PC-3 (cell line): ENCODE measurements at regions of chr12 and their contacts with region 1.

Region 1: GRCh38 chr12:25436203-25437030 is 116.7 kb downstream of the LMNTD1 start:
- DNase-seq: peak; percentile 84
- ATAC-seq: peak; percentile 69
- H3K4me3 ChIP-seq: peak overlapping the region; percentile 82
- H3K27ac ChIP-seq: no peak overlapping the region
- H3K4me1 ChIP-seq: peaks cover 20% of the 10 kb centered on the region
- H3K27me3 ChIP-seq: no peaks in the 10 kb centered on the region
- CTCF ChIP-seq: peak; percentile 93

Region 2: GRCh38 chr12:25364529-25365339 is 71.7 kb before region 1 on chr12:
- CTCF ChIA-PET with region 1: no interaction called
- POLR2A ChIA-PET with region 1: no interaction called
- intact Hi-C with region 1: no loop called
- DNase-seq: no peak
- ATAC-seq: no peak
- H3K4me3 ChIP-seq: no peak overlapping the region
- H3K27ac ChIP-seq: no peak overlapping the region
- H3K4me1 ChIP-seq: no peaks in the 10 kb centered on the region
- H3K27me3 ChIP-seq: peaks cover 23% of the 10 kb centered on the region
- CTCF ChIP-seq: no peak

Region 3: DNA sequence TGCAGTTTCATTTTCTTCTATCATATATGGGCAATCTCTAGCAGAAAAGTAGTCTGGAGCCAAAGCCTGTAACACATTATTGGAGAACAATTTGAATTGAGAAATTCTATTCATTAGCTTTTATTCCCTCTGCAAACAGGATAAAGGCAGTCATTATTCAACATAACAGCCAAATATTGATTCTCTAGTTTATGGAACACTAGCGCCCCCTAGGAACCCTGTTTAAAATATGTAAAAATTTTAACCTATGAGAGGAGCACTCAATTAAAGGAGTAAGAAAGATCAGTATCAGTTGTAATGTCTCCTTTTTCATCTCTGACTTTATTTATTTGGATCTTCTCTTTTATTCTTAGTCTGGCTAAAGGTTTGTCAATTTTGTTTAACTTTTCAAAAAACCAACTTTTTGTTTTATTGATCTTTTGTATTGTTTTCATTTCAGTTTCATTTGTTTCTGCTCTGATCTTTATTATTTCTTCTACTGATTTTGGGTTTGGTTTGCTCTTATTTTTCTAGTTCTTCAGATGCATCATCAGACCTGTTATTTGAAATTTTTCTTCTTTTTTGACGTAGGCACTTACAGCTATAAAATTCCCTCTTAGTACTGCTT is 121.5 kb after region 1 on chr12:
- CTCF ChIA-PET with region 1: no interaction called
- POLR2A ChIA-PET with region 1: no interaction called
- intact Hi-C with region 1: loop called (anchors 1 kb)
- DNase-seq: peak; percentile 75
- ATAC-seq: no peak
- H3K4me3 ChIP-seq: no peak overlapping the region
- H3K27ac ChIP-seq: no peak overlapping the region
- H3K4me1 ChIP-seq: no peaks in the 10 kb centered on the region
- H3K27me3 ChIP-seq: no peaks in the 10 kb centered on the region
- CTCF ChIP-seq: peak; percentile 78

Region 4: GRCh38 chr12:25670076-25671055 is 233.9 kb after region 1 on chr12:
- CTCF ChIA-PET with region 1: no interaction called
- POLR2A ChIA-PET with region 1: no interaction called
- intact Hi-C with region 1: loop called (anchors 5 kb)
- DNase-seq: peak; percentile 83
- ATAC-seq: peak; percentile 90
- H3K4me3 ChIP-seq: no peak overlapping the region
- H3K27ac ChIP-seq: peak overlapping the region; percentile 22
- H3K4me1 ChIP-seq: peaks cover 18% of the 10 kb centered on the region
- H3K27me3 ChIP-seq: no peaks in the 10 kb centered on the region
- CTCF ChIP-seq: no peak